ENCODE measurements at regions of chr11 and their contacts with region 1.

Region 1: GRCh38 chr11:13183094-13183825 is 94.3 kb upstream of the BMAL1 start:
- DNase-seq: peak; percentile 53
- H3K4me3 Mint-ChIP-seq: peak overlapping the region; percentile 50
- H3K27ac Mint-ChIP-seq: no peak overlapping the region
- H3K4me1 Mint-ChIP-seq: peaks cover 12% of the 10 kb centered on the region
- H3K27me3 Mint-ChIP-seq: no peaks in the 10 kb centered on the region
- CTCF ChIP-seq: peak; percentile 40

Region 2: DNA sequence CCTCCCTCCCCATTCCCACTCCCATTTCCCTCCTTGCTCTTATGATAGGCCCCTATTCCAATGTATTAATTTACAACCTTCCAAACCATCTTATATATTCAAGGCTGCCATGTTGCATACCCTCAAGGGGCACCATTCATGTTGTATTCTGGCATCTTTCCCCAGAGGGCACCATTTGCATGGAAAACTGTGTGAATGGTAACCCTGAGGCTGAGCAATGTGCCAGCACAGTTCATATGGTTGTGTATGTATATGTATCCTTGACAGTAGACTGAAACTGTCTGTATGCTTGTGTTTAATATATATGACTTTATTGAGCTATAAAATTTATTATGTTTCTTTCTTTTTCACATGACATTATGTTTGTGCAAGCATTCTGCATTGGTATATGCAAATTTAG is 166.8 kb before region 1 on chr11:
- CTCF ChIA-PET with region 1: no interaction called
- POLR2A ChIA-PET with region 1: no interaction called
- intact Hi-C with region 1: loop called (anchors 1 kb)
- DNase-seq: peak; percentile 69
- H3K4me3 Mint-ChIP-seq: no peak overlapping the region
- H3K27ac Mint-ChIP-seq: no peak overlapping the region
- H3K4me1 Mint-ChIP-seq: no peaks in the 10 kb centered on the region
- H3K27me3 Mint-ChIP-seq: peaks cover 32% of the 10 kb centered on the region
- CTCF ChIP-seq: peak; percentile 28

Region 3: DNA sequence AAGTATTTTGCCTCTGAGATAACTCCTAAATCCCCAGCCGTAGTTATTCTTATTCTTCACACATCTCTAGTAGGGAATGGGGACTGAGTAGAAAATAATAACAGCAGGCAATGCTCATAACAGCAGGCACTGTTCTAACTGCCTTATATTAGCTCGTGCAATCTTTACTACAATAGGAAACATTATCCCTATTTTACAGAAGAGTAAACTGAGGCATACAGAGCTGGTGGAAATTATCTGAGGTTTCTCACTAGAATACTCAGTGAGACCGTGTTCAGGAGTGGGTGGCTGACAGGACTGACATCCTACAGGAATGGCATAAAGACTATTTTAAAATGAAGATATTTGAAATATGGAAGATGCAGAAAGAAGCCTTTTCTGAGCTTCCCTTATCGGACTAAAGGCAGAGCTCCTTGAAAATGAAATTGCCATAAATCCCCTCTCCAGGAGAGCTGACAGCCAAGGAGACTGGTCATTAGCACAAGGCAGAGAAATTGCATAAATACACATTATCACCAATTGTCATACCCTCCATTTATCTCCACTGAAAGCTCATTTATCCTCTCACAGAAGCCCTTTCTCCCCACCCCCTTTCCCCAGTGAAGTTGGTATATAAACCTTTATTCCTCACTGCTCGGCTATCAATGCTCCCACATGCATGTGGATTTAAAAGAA is 80.3 kb before region 1 on chr11:
- CTCF ChIA-PET with region 1: no interaction called
- POLR2A ChIA-PET with region 1: no interaction called
- intact Hi-C with region 1: no loop called
- DNase-seq: no peak
- H3K4me3 Mint-ChIP-seq: no peak overlapping the region
- H3K27ac Mint-ChIP-seq: no peak overlapping the region
- H3K4me1 Mint-ChIP-seq: peaks cover 2% of the 10 kb centered on the region
- H3K27me3 Mint-ChIP-seq: peaks cover 11% of the 10 kb centered on the region
- CTCF ChIP-seq: no peak

Region 4: GRCh38 chr11:13152736-13153533 is 30.3 kb before region 1 on chr11:
- CTCF ChIA-PET with region 1: interaction called, 14 read pairs
- POLR2A ChIA-PET with region 1: no interaction called
- intact Hi-C with region 1: no loop called
- DNase-seq: peak; percentile 60
- H3K4me3 Mint-ChIP-seq: no peak overlapping the region
- H3K27ac Mint-ChIP-seq: no peak overlapping the region
- H3K4me1 Mint-ChIP-seq: no peaks in the 10 kb centered on the region
- H3K27me3 Mint-ChIP-seq: no peaks in the 10 kb centered on the region
- CTCF ChIP-seq: peak; percentile 55

Region 5: DNA sequence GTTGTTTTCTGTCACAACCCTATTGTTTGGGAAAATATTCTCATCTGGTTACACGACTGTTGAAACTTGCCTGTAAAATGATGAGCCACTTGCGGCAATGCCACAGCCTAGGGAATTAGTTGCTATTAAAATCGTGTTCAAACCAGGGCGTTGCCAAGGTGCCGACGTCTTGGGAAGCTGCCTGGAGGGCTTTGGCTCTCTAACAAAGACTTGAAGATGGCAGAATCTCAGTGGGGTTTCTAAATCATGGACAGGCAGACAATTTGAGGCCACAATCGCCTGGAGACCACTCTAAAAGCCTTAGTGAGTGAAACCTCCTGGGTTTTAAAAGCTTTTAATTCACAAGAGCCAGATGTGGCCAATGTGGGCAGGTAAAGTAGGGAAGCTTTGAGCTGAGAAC is 22.9 kb before region 1 on chr11:
- CTCF ChIA-PET with region 1: interaction called, 11 read pairs
- POLR2A ChIA-PET with region 1: interaction called, 7 read pairs
- intact Hi-C with region 1: no loop called
- DNase-seq: peak; percentile 76
- H3K4me3 Mint-ChIP-seq: no peak overlapping the region
- H3K27ac Mint-ChIP-seq: peak overlapping the region; percentile 63
- H3K4me1 Mint-ChIP-seq: peaks cover 12% of the 10 kb centered on the region
- H3K27me3 Mint-ChIP-seq: no peaks in the 10 kb centered on the region
- CTCF ChIP-seq: no peak

Region 6: DNA sequence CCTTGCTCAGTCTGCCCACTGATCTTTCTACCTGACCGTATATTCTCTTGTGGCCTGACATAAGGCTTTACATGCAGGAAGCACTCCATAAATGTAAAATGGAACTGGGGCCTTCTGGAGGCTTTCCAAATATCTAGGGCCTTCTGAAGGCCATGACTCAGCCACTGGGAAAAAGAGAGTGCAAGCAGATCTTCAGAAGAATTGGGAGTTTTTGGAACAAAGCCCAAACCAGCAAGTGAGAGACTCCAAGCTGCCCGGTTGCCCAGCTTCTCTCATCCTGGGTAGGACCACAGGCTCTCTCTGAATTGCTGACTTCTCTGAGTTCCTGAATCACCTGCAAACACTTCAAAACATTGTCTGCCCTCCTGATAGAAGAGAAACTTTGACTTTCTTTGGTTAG is 13.6 kb before region 1 on chr11:
- CTCF ChIA-PET with region 1: interaction called, 35 read pairs
- POLR2A ChIA-PET with region 1: interaction called, 14 read pairs
- intact Hi-C with region 1: no loop called
- DNase-seq: peak; percentile 98
- H3K4me3 Mint-ChIP-seq: no peak overlapping the region
- H3K27ac Mint-ChIP-seq: no peak overlapping the region
- H3K4me1 Mint-ChIP-seq: peaks cover 40% of the 10 kb centered on the region
- H3K27me3 Mint-ChIP-seq: no peaks in the 10 kb centered on the region
- CTCF ChIP-seq: no peak

Region 7: GRCh38 chr11:13324709-13325108 is 141.4 kb after region 1 on chr11:
- CTCF ChIA-PET with region 1: no interaction called
- POLR2A ChIA-PET with region 1: no interaction called
- intact Hi-C with region 1: no loop called
- DNase-seq: no peak
- H3K4me3 Mint-ChIP-seq: no peak overlapping the region
- H3K27ac Mint-ChIP-seq: no peak overlapping the region
- H3K4me1 Mint-ChIP-seq: peaks cover 13% of the 10 kb centered on the region
- H3K27me3 Mint-ChIP-seq: no peaks in the 10 kb centered on the region
- CTCF ChIP-seq: no peak

Region 8: DNA sequence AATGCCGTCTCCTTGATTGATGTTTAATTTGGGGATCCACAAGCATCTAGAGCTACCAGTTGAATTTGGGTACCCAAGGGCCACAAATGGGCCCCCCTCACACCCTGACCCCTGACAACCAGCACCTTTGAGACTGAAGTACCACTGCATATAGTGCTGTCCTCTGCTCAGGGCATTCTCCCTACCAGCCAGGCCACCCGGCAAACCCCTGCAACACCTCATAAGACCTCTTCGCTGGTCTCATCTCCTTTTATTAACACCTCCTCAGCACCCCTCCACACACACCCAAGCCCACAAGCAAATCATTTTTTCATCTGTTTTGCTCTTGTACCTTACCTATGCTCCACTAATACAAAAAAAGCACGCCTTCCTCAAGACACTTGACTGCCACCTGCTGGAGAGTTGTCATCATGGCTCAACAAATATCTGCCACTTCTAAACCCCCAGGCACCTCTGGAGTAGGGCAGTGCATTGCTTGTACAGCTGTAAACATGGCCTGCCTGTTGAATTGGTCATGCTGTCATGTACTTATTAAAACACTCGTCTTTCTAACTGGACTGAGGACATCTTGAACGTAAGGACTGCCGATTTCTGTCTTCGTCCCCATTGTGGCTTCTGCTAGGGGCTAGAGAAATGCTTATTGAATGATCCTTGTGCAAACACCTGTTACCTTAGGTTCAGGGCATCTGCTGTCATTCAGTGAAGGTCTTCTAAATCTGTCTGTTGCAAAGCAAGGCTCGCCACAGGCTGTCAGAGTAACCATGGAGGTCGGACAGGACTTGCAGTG is 160.9 kb after region 1 on chr11:
- CTCF ChIA-PET with region 1: interaction called, 5 read pairs
- POLR2A ChIA-PET with region 1: no interaction called
- intact Hi-C with region 1: loop called (anchors 1 kb)
- DNase-seq: peak; percentile 86
- H3K4me3 Mint-ChIP-seq: no peak overlapping the region
- H3K27ac Mint-ChIP-seq: no peak overlapping the region
- H3K4me1 Mint-ChIP-seq: peaks cover 30% of the 10 kb centered on the region
- H3K27me3 Mint-ChIP-seq: no peaks in the 10 kb centered on the region
- CTCF ChIP-seq: peak; percentile 70

Measured in MCF 10A (cell line).